Heart right ventricle (tissue), 16 donors: ENCODE measurements at regions of chr17 and their contacts with region 1.

Region 1: DNA sequence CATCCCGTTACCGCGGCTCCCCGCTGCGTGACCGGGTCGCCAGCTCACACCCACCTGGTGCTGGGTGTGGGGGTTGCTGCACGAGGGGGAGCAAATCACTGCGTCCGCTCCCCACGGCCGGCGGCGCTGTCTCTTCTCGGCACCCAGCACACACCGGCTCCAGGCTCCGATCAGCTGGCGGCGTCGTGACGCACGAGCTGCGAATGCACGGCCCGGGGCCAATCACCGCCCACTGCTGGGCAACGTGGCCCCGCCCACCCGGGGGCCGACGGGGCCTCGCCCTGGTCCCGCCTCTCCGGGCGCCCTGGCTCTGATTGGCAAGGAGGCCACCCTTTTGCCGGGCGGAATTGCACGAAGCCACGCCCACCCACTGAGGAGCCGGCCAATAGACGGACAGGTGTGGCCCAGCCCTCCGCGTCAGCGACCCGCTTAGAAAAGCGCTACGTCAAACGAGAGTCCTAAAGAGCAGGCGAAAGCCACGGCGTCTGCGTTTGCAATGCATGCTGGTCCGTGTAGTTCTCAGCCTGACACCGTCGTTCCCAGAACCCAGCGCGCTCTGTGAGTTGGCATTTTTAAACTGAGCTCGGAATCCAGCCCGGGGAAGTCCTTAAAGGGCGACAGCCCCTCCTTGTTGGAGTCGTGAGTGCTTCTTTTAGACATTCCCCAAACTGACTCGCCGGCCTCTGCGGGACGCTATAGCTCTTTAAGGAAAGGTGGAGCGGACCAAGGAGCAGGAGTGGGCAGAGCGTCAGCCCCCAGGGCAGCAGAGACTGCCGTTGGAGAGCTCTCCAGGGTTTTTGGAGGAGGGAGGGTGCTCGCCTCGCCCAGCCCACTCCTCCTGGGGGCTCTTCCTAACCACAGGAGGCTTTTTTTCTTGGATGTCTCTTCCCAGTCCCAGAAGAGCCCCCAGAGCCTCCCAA is 6.2 kb upstream of the TLCD2 start:
- DNase-seq: peak; percentile 100
- ATAC-seq: peak; percentile 73 to 86 (median 83)
- H3K4me3 ChIP-seq: peak overlapping the region; percentile 81 to 99 (median 94)
- H3K27ac ChIP-seq: peak overlapping the region; percentile 98 to 100 (median 99)
- H3K4me1 ChIP-seq: peaks cover 17 to 68% (median 51%) of the 10 kb centered on the region in 9 donors
- H3K27me3 ChIP-seq: no peaks in the 10 kb centered on the region
- CTCF ChIP-seq: peak in 3 of 9 donors; percentile 7 to 34 (median 14)

Region 2: GRCh38 chr17:1573916-1574696 is 142.2 kb before region 1 on chr17:
- intact Hi-C with region 1: loop called in 2 of 10 experiments (anchors 5 to 10 kb)
- DNase-seq: peak; percentile 85 to 91
- ATAC-seq: peak; percentile 63 to 83 (median 72)
- H3K4me3 ChIP-seq: peak overlapping the region in 1 of 10 donors; percentile 6
- H3K27ac ChIP-seq: peak overlapping the region in 9 of 10 donors; percentile 55 to 94 (median 69)
- H3K4me1 ChIP-seq: peaks cover 26 to 54% (median 46%) of the 10 kb centered on the region in 9 donors
- H3K27me3 ChIP-seq: no peaks in the 10 kb centered on the region
- CTCF ChIP-seq: peak; percentile 95 to 99 (median 97)

Region 3: GRCh38 chr17:1617620-1618174 is 98.6 kb before region 1 on chr17:
- intact Hi-C with region 1: no loop called
- DNase-seq: peak in 1 of 2 donors; percentile 48
- ATAC-seq: peak; percentile 42 to 88 (median 76)
- H3K4me3 ChIP-seq: peak overlapping the region in 1 of 10 donors; percentile 11
- H3K27ac ChIP-seq: peak overlapping the region in 5 of 10 donors; percentile 4 to 66 (median 58)
- H3K4me1 ChIP-seq: peaks cover 0 to 28% (median 12%) of the 10 kb centered on the region in 9 donors
- H3K27me3 ChIP-seq: no peaks in the 10 kb centered on the region
- CTCF ChIP-seq: peak in 2 of 9 donors; percentile 12 to 20

Region 4: GRCh38 chr17:1673041-1673785 is 43.1 kb before region 1 on chr17:
- intact Hi-C with region 1: loop called in 7 of 10 experiments (anchors 5 kb)
- DNase-seq: no peak
- ATAC-seq: no peak
- H3K4me3 ChIP-seq: no peak overlapping the region
- H3K27ac ChIP-seq: no peak overlapping the region
- H3K4me1 ChIP-seq: peaks cover 0 to 28% (median 14%) of the 10 kb centered on the region in 9 donors
- H3K27me3 ChIP-seq: no peaks in the 10 kb centered on the region
- CTCF ChIP-seq: no peak

Region 5: DNA sequence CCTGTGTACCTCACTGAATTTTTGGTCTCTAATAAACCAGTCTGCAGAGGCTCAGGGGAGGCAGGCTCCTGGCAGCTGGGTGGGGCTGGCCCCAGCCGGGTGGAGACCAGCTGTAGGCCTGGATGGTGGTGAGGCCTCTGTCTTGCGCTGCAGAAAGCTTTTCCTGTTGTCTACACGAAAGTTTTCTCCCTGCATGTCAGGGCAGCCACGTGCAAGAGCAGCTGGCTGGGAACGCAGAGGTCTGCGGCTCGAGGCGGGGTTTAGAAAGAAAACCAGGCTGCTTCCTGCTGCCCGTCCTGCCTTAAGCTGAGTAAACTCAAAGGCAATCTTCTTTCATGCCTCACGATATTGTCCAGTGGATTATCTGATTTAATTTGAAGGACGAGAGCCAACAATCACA is 47.9 kb after region 1 on chr17:
- intact Hi-C with region 1: no loop called
- DNase-seq: peak; percentile 66 to 71
- ATAC-seq: peak; percentile 67 to 75 (median 70)
- H3K4me3 ChIP-seq: peak overlapping the region in 7 of 10 donors; percentile 38 to 60 (median 53)
- H3K27ac ChIP-seq: peak overlapping the region; percentile 43 to 90 (median 80)
- H3K4me1 ChIP-seq: peaks cover 0 to 47% (median 14%) of the 10 kb centered on the region in 9 donors
- H3K27me3 ChIP-seq: no peaks in the 10 kb centered on the region
- CTCF ChIP-seq: no peak

Region 6: GRCh38 chr17:1783834-1784611 is 67.7 kb after region 1 on chr17:
- intact Hi-C with region 1: loop called in 6 of 10 experiments (anchors 2 to 5 kb)
- DNase-seq: peak; percentile 68 to 87
- ATAC-seq: peak; percentile 78 to 85 (median 84)
- H3K4me3 ChIP-seq: peak overlapping the region in 6 of 10 donors; percentile 2 to 27 (median 12)
- H3K27ac ChIP-seq: peak overlapping the region; percentile 89 to 95 (median 93)
- H3K4me1 ChIP-seq: peaks cover 21 to 92% (median 61%) of the 10 kb centered on the region in 9 donors
- H3K27me3 ChIP-seq: no peaks in the 10 kb centered on the region
- CTCF ChIP-seq: peak; percentile 37 to 82 (median 70)

Region 7: DNA sequence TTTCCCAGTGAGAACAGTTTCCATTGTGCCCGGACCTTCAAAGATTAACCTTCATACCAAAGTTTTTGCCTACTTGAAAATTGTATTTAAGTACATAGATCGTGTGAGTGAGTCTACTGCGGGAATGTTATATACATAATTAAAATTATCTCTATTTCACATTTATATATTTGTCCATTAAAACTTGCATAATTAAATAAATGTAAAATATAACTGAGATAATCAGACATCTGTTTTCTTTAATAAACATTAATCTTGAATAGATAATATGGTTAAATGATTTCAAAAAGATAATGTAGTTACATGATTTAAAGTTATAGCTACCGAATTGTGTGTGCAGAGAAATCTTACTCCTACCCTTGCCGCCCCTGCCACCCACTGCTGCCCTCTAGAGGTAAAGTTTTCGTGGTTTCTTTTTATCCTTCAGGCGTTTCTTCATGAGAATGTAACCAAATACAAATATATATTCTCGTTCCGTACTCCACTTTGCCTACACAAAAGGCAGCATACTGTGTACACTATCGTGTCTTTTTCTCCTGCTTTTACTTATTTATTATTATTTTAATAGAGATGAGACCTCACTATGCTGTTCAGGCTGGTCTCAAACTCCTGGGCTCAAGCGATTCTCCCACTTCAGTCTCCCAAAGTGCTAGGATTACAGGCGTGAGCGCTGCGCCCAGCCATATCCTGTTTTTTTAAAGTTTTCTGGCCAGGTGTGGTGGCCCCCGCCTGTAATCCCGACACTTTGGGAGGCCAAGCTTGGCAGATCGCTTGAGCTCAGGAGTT is 149.1 kb after region 1 on chr17:
- intact Hi-C with region 1: loop called in 6 of 10 experiments (anchors 2 to 10 kb)
- DNase-seq: peak in 1 of 2 donors; percentile 36
- ATAC-seq: peak in 1 of 8 donors; percentile 37
- H3K4me3 ChIP-seq: no peak overlapping the region
- H3K27ac ChIP-seq: no peak overlapping the region
- H3K4me1 ChIP-seq: no peaks in the 10 kb centered on the region
- H3K27me3 ChIP-seq: no peaks in the 10 kb centered on the region
- CTCF ChIP-seq: peak; percentile 48 to 75 (median 63)